MCF 10A (cell line): ENCODE measurements at regions of chr19 and their contacts with region 1.

Region 1: DNA sequence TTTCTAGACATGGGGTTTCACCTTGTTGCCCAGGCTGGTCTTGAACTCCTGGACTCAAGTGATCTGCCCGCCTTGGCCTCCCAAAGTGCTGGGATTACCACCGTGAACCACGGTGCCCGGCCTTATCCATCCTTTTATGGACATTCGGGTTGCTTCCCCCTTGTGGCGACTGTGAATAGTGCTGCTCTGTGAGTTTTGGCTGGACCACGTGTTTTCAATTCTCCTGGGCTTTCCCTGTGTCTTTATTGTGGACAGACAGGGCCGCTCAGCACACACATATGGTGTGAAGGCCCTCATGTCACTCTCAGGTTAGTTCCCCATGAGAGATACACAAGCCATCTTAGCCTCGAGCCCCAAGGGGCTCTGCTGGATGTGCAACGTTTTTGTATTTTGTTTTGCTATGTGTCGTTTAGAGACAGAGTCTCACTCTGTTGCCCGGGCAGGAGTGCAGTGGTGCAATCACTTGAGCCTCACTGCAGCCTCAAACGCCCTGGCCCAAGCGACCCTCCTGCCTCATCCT is 40.5 kb downstream of the MAU2 start:
- DNase-seq: peak; percentile 90
- H3K4me3 Mint-ChIP-seq: no peak overlapping the region
- H3K27ac Mint-ChIP-seq: no peak overlapping the region
- H3K4me1 Mint-ChIP-seq: peaks cover 7% of the 10 kb centered on the region
- H3K27me3 Mint-ChIP-seq: no peaks in the 10 kb centered on the region
- CTCF ChIP-seq: peak; percentile 69

Region 2: DNA sequence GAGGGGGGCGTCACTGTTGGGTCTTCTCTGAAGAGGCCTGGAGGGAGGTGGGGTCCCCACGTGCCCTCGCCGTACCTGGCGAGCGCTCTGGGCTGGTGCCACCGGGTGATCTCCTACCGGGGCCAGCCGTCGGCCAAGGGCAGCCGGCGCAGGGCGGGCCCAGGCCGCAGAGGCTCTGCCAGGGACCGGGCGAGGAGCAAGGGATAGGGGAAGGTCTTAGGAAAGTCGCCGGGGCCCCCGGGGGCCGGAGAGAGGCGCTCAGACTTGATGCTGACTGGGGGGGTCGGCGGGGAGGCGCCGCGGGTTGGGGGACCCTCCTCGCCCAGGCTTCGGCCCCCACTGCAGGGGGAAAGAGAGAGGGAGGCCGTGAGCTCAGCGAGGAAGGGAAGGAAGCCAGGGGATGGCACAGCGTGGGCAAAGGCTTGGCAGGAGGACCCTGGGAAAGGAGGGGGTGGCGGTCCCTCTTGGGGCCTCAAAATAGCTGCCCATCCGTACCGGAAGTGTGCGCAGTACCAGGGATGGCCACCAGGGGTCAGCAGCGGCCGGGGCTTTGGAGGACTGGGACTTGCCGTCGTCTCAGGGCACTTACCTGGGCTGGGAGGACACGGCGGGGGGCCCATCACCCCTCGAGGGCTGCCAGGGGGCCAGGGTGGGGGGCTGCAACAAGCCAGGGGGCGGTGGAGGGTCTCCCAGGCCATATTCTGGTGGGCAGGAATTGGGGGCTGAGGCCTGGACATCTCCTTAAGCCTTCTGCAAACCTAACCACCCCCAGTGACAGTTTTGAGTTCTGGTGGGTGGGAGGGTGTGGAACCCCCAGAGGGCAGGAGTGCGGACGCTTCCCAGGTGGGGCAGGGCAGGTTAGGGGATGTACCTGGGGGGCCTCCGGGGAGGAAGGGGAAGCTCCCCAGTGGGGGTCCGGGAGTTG is 215.2 kb before region 1 on chr19:
- CTCF ChIA-PET with region 1: interaction called, 3 read pairs
- POLR2A ChIA-PET with region 1: no interaction called
- intact Hi-C with region 1: loop called (anchors 1 kb)
- DNase-seq: peak; percentile 73
- H3K4me3 Mint-ChIP-seq: no peak overlapping the region
- H3K27ac Mint-ChIP-seq: no peak overlapping the region
- H3K4me1 Mint-ChIP-seq: no peaks in the 10 kb centered on the region
- H3K27me3 Mint-ChIP-seq: no peaks in the 10 kb centered on the region
- CTCF ChIP-seq: peak; percentile 95

Region 3: DNA sequence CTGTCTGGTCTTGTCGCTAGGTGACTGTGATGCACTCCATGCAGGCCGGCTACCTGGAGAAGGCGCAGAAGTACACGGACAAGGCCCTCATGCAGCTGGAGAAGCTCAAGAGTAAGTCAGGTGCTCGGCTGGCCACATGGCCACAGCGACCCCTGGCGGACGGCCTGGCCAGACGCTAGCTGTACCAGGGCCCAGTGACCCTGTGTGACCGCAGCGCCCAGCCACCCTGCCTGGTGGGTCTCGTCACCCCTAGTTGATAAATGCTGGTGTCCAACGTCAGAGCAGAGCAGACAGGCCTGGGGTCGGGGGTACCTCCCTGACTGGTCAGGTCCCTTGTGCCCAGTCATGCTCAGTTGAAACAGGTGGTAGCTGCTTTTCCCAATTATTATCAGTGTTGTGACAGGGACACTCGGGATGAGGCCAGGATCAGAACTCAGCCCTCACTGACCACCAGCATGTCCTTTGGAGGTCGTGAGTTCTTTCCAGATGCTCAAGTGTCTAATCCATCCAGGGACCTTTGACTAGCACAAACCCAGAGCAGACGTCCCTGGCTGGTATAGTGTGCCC is 18.3 kb before region 1 on chr19:
- CTCF ChIA-PET with region 1: interaction called, 12 read pairs
- POLR2A ChIA-PET with region 1: interaction called, 3 read pairs
- intact Hi-C with region 1: no loop called
- DNase-seq: peak; percentile 66
- H3K4me3 Mint-ChIP-seq: no peak overlapping the region
- H3K27ac Mint-ChIP-seq: no peak overlapping the region
- H3K4me1 Mint-ChIP-seq: no peaks in the 10 kb centered on the region
- H3K27me3 Mint-ChIP-seq: no peaks in the 10 kb centered on the region
- CTCF ChIP-seq: peak; percentile 89

Region 4: GRCh38 chr19:19385108-19385899 is 24.2 kb after region 1 on chr19:
- CTCF ChIA-PET with region 1: interaction called, 30 read pairs
- POLR2A ChIA-PET with region 1: interaction called, 10 read pairs
- intact Hi-C with region 1: no loop called
- DNase-seq: peak; percentile 100
- H3K4me3 Mint-ChIP-seq: peak overlapping the region; percentile 95
- H3K27ac Mint-ChIP-seq: peak overlapping the region; percentile 98
- H3K4me1 Mint-ChIP-seq: peaks cover 30% of the 10 kb centered on the region
- H3K27me3 Mint-ChIP-seq: no peaks in the 10 kb centered on the region
- CTCF ChIP-seq: no peak

Region 5: GRCh38 chr19:19404879-19405860 is 44.0 kb after region 1 on chr19 and contains the start of gene GATAD2A:
- CTCF ChIA-PET with region 1: interaction called, 16 read pairs
- POLR2A ChIA-PET with region 1: interaction called, 38 read pairs
- intact Hi-C with region 1: loop called (anchors 1 kb)
- DNase-seq: peak; percentile 95
- H3K4me3 Mint-ChIP-seq: peak within 1 kb of the TSS; percentile 95
- H3K27ac Mint-ChIP-seq: peak within 1 kb of the TSS; percentile 94
- H3K4me1 Mint-ChIP-seq: peaks cover 39% of the 10 kb centered on the region
- H3K27me3 Mint-ChIP-seq: no peaks in the 10 kb centered on the region
- CTCF ChIP-seq: no peak
- total RNA-seq, gene GATAD2A: 77.4 and 91.5 TPM in 2 replicates

Region 6: DNA sequence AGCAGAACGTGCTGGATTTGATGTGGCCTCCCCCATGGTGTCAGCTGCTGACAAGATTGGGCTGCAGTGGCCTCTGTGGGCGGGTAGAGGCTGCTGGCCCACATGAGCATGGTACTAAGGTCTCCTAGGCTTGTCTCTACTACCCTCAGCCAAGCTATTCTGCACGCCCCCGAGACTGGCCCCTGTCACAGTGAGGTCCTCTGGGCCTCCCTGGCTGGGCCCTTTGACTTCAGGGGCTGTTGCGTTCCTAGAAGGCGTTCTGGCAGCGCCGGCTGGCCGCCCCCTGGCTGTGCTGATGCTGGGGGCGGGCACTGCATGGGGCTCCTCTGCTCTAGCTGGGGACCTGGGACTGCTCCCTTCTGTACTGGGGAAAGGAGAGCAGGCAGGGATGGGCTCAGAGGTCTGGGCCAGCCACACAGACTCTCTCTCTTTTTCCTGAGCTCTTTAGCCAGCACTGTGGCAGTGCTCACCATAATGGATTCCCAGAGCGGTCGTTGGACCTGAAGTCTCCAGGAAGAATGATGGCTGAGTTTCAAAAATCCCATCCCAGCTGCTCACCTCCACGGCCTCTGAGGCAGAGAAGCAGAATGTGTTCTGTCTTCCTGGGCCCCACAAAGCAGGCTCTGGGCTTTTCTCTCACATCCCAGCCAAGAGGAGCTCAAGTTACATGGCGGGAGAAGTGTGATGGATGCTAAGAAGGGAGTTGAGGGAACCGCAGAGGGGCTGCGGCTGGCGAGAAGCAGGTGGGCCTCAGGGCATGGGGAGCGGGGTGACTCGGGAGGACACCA is 121.9 kb after region 1 on chr19:
- CTCF ChIA-PET with region 1: interaction called, 176 read pairs
- POLR2A ChIA-PET with region 1: no interaction called
- intact Hi-C with region 1: no loop called
- DNase-seq: no peak
- H3K4me3 Mint-ChIP-seq: no peak overlapping the region
- H3K27ac Mint-ChIP-seq: no peak overlapping the region
- H3K4me1 Mint-ChIP-seq: no peaks in the 10 kb centered on the region
- H3K27me3 Mint-ChIP-seq: no peaks in the 10 kb centered on the region
- CTCF ChIP-seq: no peak